ENCODE measurements at regions of chr15 and their contacts with region 1.

Region 1: GRCh38 chr15:57866149-57866736 is 159.7 kb downstream of the POLR2M start:
- DNase-seq: no peak
- H3K4me3 ChIP-seq: no peak overlapping the region
- H3K27ac ChIP-seq: no peak overlapping the region
- H3K4me1 ChIP-seq: no peaks in the 10 kb centered on the region
- H3K27me3 ChIP-seq: peaks cover 0 to 15% (median 0%) of the 10 kb centered on the region in 4 donors
- CTCF ChIP-seq: peak; percentile 43 to 70 (median 62)
- POLR2A ChIP-seq: no peak

Region 2: DNA sequence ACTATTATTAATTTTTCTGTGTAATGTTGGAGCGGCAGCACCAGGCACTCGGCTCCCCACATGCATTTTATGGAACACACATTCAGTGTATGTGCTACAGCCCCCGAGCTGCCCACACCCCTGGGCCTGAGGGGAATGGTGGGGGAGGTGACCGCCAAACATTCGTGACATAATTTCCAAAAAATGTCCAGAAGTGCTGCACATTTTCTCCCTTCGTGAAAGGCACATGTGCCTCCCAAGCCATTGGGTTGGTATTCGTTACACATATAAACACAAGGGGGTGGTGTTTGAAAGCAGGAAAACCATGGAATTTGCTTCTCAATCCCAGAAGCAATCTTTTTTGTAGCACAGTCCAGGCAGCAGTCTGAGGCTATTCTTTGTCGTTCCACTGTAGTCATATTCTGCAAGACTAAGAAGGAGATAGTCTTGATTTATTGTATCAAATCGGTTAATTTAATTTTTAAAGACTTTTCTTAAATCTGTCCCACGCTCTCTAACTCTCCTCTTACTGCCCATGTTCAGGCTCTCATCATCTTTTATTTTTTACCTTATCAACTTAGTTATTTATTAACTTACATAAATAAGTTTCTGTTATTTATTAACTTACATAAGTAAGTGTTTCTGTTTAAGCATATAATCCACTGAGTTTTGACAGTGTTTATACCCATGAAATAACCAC is 198.9 kb before region 1 on chr15:
- intact Hi-C with region 1: loop called (anchors 10 kb)
- DNase-seq: no peak
- H3K4me3 ChIP-seq: no peak overlapping the region
- H3K27ac ChIP-seq: no peak overlapping the region
- H3K4me1 ChIP-seq: peaks cover 0 to 5% (median 0%) of the 10 kb centered on the region in 3 donors
- H3K27me3 ChIP-seq: no peaks in the 10 kb centered on the region
- CTCF ChIP-seq: peak in 2 of 6 experiments; percentile 16 to 34
- POLR2A ChIP-seq: no peak

Region 3: GRCh38 chr15:57692709-57693108 is 173.5 kb before region 1 on chr15:
- intact Hi-C with region 1: no loop called
- DNase-seq: no peak
- H3K4me3 ChIP-seq: no peak overlapping the region
- H3K27ac ChIP-seq: no peak overlapping the region
- H3K4me1 ChIP-seq: peaks cover 0 to 4% (median 0%) of the 10 kb centered on the region in 3 donors
- H3K27me3 ChIP-seq: no peaks in the 10 kb centered on the region
- CTCF ChIP-seq: no peak
- POLR2A ChIP-seq: no peak

Region 4: DNA sequence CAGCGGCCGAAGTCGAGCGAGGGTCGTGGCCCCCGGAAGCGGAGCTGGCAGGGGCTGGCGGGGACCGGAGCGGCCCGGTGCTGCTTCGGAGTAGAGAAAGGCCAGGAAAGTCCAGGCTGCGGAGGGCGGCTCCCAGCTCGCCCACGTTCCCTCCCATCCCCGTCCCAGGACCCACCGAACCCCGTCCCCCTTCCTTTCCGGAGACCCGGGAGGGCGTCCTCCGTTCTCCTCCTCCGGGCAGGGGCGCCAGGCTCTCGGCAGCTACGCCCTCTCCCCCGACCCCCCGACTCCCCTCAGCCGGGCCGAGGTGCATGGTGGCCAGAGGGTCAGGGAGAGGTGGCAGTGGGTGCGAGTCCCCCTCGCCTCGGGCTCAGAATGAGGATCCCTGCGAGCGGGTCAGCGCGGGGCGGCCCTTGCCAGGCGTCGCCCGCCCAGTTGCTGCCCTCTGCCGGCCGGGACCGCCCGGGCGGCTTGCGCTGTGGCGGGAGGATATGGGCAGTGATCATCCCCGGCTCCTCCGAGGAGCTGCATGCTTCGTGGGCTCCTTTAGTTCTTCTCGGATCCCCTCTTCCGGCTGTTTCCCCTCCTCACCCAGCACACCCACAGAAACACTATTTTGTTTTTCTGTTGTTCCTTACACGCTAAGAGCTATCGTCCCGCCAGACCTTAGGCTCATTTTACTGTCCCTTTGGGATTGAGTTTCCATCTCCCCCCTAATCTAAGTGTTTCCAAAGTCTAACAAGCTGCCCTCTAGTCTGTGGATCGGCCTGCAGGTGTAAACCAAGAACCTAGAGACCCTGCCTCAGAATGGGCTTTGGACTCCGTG is 200.0 kb after region 1 on chr15:
- intact Hi-C with region 1: loop called (anchors 5 kb)
- DNase-seq: no peak
- H3K4me3 ChIP-seq: peak overlapping the region; percentile 24 to 64 (median 48)
- H3K27ac ChIP-seq: peak overlapping the region in 1 of 4 donors; percentile 4
- H3K4me1 ChIP-seq: peaks cover 7 to 19% (median 8%) of the 10 kb centered on the region in 3 donors
- H3K27me3 ChIP-seq: peaks cover 12 to 81% (median 18%) of the 10 kb centered on the region in 4 donors
- CTCF ChIP-seq: peak; percentile 37 to 80 (median 68)
- POLR2A ChIP-seq: no peak

Region 5: DNA sequence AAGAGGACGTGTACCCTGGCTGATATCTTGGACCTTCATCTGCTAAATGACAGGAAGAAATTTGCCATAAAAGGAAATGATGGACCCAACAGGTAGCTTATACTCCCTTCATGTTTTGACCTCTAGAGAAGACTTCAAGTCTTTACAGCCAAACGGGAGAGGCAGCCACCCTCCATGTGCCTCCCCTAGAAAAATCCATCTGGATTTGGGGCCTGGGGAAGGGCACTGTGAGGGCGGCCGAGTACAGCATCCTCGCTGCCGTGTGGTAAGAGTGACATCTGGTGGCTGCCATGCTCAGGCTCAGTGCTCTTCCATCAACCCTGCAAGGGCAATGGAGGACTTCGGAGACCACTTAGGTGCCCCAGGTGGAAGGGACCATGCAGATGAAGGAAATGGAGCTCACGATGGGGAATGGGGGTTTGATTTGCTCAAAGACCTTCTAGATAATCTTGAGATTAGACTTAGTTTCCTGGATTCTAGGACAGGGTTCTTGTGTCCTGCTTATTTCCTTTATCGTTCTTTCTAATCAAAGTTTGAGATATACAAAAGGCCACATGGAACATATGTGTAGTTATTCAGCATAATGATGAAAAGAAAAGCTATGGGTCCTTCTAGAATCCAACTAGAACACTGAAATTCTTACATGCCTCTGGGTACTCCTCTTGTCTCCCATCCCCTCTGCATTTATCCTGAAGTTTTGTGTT is 316.4 kb after region 1 on chr15:
- intact Hi-C with region 1: loop called (anchors 10 kb)
- DNase-seq: no peak
- H3K4me3 ChIP-seq: no peak overlapping the region
- H3K27ac ChIP-seq: no peak overlapping the region
- H3K4me1 ChIP-seq: no peaks in the 10 kb centered on the region
- H3K27me3 ChIP-seq: peaks cover 0 to 30% (median 0%) of the 10 kb centered on the region in 4 donors
- CTCF ChIP-seq: peak in 5 of 6 experiments; percentile 37 to 69 (median 54)
- POLR2A ChIP-seq: no peak